ENCODE measurements at regions of chr13 and their contacts with region 1.

Region 1: DNA sequence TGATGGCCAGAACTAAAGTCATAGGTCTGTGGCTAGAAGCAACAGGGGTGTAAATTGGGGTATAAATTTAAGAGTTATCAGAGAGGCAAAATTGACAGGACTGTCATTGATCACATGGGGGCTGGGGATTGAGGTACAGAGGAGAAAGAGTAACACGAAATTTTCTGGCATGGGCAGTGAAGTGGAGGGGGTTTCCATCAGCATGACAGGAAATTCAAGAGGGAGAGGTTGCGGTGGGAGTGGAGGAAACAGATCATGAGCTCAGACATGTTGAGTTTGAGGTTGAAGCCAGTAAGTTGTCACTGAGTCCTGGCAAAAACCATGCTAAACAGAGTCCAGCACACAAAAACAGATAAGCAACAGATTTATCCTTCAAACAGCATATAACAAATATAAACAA is 192.1 kb upstream of the TSC22D1 start:
- DNase-seq: peak; percentile 69
- ATAC-seq: peak; percentile 70
- H3K4me3 Mint-ChIP-seq: peak overlapping the region; percentile 5
- H3K27ac Mint-ChIP-seq: peak overlapping the region; percentile 90
- H3K4me1 Mint-ChIP-seq: peaks cover 28% of the 10 kb centered on the region
- H3K27me3 Mint-ChIP-seq: no peaks in the 10 kb centered on the region

Region 2: GRCh38 chr13:43094901-43095300 is 1673.3 kb before region 1 on chr13:
- CTCF ChIA-PET with region 1: no interaction called
- POLR2A ChIA-PET with region 1: no interaction called
- intact Hi-C with region 1: no loop called
- DNase-seq: no peak
- ATAC-seq: peak; percentile 93
- H3K4me3 Mint-ChIP-seq: no peak overlapping the region
- H3K27ac Mint-ChIP-seq: peak overlapping the region; percentile 64
- H3K4me1 Mint-ChIP-seq: peaks cover 24% of the 10 kb centered on the region
- H3K27me3 Mint-ChIP-seq: no peaks in the 10 kb centered on the region

Region 3: GRCh38 chr13:44648392-44649103 is 119.7 kb before region 1 on chr13:
- CTCF ChIA-PET with region 1: no interaction called
- POLR2A ChIA-PET with region 1: no interaction called
- intact Hi-C with region 1: loop called (anchors 1 to 2 kb)
- DNase-seq: peak; percentile 25
- ATAC-seq: peak; percentile 85
- H3K4me3 Mint-ChIP-seq: no peak overlapping the region
- H3K27ac Mint-ChIP-seq: peak overlapping the region; percentile 37
- H3K4me1 Mint-ChIP-seq: peaks cover 23% of the 10 kb centered on the region
- H3K27me3 Mint-ChIP-seq: peaks cover 26% of the 10 kb centered on the region

Region 4: DNA sequence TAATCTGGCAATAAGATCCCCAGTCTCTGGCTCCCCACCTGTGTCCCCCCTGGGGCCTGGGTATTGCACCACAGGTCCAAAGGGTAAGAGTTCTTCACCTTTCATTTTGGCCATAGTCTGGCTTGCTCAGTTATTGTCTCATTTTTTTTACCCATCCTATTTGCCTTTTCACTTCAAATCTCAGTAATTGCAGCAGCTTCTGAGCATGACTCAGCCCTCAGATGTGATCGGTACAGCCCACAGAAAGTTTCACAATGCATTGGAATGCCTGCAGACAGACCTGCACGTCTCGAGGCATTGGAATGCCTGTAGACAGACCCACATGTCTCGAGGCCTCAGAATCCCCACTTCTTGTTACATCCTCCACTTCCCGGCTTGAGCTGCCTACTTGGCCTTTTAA is 47.4 kb after region 1 on chr13:
- CTCF ChIA-PET with region 1: no interaction called
- POLR2A ChIA-PET with region 1: no interaction called
- intact Hi-C with region 1: loop called (anchors 1 to 2 kb)
- DNase-seq: peak; percentile 70
- ATAC-seq: peak; percentile 85
- H3K4me3 Mint-ChIP-seq: no peak overlapping the region
- H3K27ac Mint-ChIP-seq: no peak overlapping the region
- H3K4me1 Mint-ChIP-seq: peaks cover 32% of the 10 kb centered on the region
- H3K27me3 Mint-ChIP-seq: peaks cover 22% of the 10 kb centered on the region

Measured in activated CD4-positive, alpha-beta T cell treated with anti-CD3 and anti-CD28 coated beads for 36 hours (primary cell).